OCI-LY7 (cell line): ENCODE measurements at regions of chr1 and their contacts with region 1.

Region 1: DNA sequence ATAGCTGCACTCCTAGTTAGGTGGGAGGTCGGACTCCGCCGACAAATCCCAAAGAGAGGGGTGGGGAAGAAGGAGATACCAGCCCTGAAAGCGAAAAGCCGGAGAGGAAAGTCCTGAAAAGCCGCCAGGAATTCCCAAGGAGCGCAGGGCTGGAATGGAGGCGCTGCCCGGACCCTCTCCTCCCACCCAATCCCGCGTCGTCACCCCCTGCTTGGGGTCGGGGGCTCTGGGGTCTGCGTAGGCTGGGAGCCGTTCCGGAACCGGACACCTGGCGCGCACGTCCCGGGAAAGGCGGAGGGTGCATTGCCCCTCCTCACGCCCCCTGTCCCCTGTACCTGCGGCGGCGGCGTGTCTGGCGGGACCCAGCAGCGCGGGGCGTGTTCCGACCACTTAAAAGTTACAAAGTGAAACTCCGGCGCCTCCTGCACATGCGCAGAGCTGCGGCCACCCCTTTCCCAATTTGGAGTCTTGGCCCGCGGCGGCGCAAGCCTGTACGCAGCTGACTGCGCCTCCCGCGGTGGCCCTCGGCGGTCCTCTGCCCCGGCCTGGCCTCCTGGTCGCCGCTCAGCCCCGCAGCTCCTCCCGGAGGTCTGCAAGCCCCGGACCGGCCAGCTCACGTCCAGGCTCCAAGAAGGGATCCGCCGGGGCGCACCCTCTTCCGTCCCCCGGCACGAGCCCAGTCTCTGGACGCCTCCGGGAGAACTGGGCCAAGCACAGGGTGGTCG is at the start of gene TMEM63A:
- DNase-seq: peak; percentile 86
- H3K4me3 ChIP-seq: peak within 1 kb of the TSS; percentile 83
- H3K27ac ChIP-seq: peak within 1 kb of the TSS; percentile 32
- H3K4me1 ChIP-seq: peaks cover 47% of the 10 kb centered on the region
- CTCF ChIP-seq: peak; percentile 47; the same call in 1 of the 2 replicates
- total RNA-seq, gene TMEM63A: 20.9 and 21.0 TPM in 2 replicates

Region 2: DNA sequence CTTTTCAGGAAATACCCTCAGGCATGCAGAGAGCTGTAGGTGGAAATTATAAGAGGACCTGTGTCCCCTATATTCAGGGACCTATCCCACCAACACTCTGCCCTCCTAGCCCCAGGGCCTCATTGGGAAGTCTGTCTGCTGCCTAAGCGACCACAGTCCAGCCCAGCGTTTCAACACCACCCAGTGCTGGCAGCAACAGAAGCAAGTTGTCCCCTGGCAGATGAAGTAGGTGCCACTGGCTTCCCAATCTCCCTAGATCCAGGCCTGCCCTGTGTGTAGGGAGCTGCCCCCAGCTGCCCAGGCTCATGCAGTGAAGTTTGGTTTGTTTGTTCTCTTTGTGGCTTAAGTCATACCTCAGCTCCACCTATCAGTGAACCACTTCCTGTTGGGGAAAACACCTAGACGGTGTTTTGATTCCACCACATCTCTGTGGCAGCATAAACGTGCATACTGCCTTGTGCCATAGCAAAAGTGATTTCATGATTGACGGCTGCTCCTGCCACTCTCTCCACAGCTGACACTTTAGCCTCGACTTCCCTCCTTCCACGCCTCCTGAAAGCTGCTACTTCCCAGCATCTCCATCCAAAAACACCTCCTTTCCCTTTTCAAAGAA is 14.9 kb after region 1 on chr1:
- CTCF ChIA-PET with region 1: no interaction called
- POLR2A ChIA-PET with region 1: interaction called, 35 read pairs
- intact Hi-C with region 1: loop called (anchors 1 kb)
- DNase-seq: peak; percentile 85
- H3K4me3 ChIP-seq: peak overlapping the region; percentile 53
- H3K27ac ChIP-seq: peak overlapping the region; percentile 59
- H3K4me1 ChIP-seq: peaks cover 32% of the 10 kb centered on the region
- CTCF ChIP-seq: no peak